ENCODE measurements at regions of chr6 and their contacts with region 1.

Region 1: DNA sequence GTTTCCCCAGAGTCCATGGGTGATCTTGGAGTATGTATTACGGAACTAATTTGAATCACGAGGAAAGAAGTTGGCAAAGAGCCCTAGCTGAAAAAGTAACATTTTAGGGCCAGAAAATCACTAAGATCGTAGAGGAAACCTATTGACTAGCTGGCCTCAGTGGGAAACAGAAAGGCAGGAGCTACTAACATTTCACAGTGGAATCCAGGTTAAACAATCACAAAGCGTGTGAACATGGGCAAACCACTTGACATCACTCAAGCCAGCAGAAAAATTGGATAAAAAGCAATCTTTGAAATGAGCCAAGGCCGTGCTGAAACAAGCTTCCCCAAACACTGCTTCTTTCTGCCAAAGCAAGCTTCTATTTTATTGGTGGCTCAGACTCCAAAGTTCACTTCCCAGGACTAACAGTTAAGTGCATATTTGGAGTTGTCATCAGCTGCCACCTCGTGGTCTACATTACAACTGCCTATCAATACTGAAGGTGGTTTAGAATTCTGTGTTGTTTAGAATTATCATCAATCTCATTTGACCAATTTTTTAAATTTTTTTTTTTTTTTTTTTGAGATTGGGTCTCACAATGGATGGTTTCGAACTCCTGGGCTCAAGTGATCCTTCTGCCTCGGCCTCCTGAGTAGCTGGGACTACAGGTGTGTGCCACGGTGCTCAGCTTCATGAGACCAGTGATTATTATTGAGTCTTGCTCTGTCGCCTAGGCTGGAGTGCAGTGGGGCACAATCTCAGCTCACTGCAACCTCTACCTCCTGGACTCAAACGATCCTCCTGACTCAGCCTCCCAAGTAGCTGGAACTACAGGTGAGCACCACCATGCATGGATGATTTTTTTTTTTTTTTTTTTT is 10.6 kb downstream of the RPS10 start:
- DNase-seq: peak in 3 of 5 donors; percentile 20 to 50 (median 42)
- H3K4me3 ChIP-seq: no peak overlapping the region
- H3K4me3 Mint-ChIP-seq: no peak overlapping the region
- H3K27ac ChIP-seq: no peak overlapping the region
- H3K27ac Mint-ChIP-seq: peak overlapping the region in 2 of 8 donors; percentile 6 to 64
- H3K4me1 ChIP-seq: no peaks in the 10 kb centered on the region
- H3K4me1 Mint-ChIP-seq: peaks cover 4 to 11% (median 11%) of the 10 kb centered on the region in 3 donors
- H3K27me3 ChIP-seq: no peaks in the 10 kb centered on the region
- H3K27me3 Mint-ChIP-seq: no peaks in the 10 kb centered on the region

Region 2: DNA sequence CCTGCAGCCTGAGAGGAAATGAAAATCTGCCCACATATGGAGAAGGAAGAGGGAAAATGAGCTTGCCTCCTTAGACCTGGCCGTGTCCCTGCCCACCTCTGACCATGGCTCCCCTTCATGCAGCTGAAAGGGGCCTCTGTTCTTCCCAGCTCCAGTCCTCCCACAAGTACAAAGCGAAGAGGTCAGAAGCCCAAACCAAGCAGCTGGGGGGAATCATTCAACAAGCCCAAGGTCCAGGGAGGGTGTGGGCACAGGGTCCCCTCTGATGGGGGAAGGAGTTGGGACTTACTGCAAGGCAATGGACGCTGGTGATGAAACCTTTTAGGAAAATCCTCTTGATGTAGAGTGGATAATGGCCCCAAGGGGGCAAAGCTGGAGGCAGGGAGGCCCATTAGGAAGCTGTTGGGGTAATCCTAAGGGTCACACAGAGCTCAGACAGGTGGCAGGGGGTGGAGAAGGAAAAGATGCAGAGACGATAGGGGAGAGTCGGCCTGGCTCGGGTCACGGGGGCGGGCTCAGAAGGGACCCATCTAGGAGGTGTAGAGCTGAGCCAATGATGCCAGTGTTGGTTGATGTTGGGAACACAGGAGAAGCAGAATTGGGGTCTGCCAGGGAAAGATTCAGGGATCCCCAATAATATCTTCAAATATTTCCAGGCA is 253.2 kb before region 1 on chr6:
- CTCF ChIA-PET with region 1: interaction called, 40 read pairs
- POLR2A ChIA-PET with region 1: interaction called, 7 read pairs
- DNase-seq: no peak
- H3K4me3 ChIP-seq: no peak overlapping the region
- H3K4me3 Mint-ChIP-seq: no peak overlapping the region
- H3K27ac ChIP-seq: no peak overlapping the region
- H3K27ac Mint-ChIP-seq: no peak overlapping the region
- H3K4me1 ChIP-seq: no peaks in the 10 kb centered on the region
- H3K4me1 Mint-ChIP-seq: no peaks in the 10 kb centered on the region
- H3K27me3 ChIP-seq: no peaks in the 10 kb centered on the region
- H3K27me3 Mint-ChIP-seq: peaks cover 5 to 12% of the 10 kb centered on the region in 2 donors

Region 3: GRCh38 chr6:34392497-34393190 is 22.6 kb before region 1 on chr6 and contains the start of gene NUDT3:
- CTCF ChIA-PET with region 1: interaction called, 35 read pairs
- POLR2A ChIA-PET with region 1: no interaction called
- DNase-seq: peak; percentile 89 to 96 (median 93)
- H3K4me3 ChIP-seq: peak within 1 kb of the TSS; percentile 98
- H3K4me3 Mint-ChIP-seq: peak within 1 kb of the TSS in 3 of 7 donors; percentile 74 to 96 (median 77)
- H3K27ac ChIP-seq: peak within 1 kb of the TSS; percentile 79
- H3K27ac Mint-ChIP-seq: peak within 1 kb of the TSS; percentile 85 to 98 (median 94)
- H3K4me1 ChIP-seq: peaks cover 9% of the 10 kb centered on the region
- H3K4me1 Mint-ChIP-seq: peaks cover 15 to 33% (median 24%) of the 10 kb centered on the region in 3 donors
- H3K27me3 ChIP-seq: no peaks in the 10 kb centered on the region
- H3K27me3 Mint-ChIP-seq: no peaks in the 10 kb centered on the region
- total RNA-seq, gene NUDT3: 16.6 to 16.8 TPM

Measured in CD8-positive, alpha-beta memory T cell (primary cell).